PC-9 (cell line): ENCODE measurements at regions of chr3 and their contacts with region 1.

Region 1: DNA sequence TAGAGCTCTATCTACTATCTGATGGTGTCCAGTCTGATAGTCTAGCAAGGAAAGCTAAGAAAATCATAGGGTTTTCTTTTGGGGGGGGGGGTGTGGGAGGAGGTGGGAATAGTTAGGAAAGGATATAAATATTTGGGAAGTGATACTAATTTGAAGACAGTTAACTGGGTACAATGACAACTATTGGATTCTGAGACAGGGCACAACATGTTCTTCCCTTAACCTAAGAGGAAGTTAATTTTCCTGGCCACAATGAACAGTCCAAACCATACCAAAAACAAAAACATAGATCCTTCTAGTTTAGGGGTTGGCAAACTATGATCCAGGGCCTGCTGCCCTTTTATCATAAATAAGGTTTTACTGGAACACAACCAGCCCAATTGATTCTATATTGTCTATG is 10.0 kb upstream of the HCLS1 start:
- DNase-seq: no peak
- H3K4me3 ChIP-seq: no peak overlapping the region
- H3K27ac ChIP-seq: no peak overlapping the region
- H3K4me1 ChIP-seq: no peaks in the 10 kb centered on the region
- H3K27me3 ChIP-seq: no peaks in the 10 kb centered on the region
- CTCF ChIP-seq: no peak

Region 2: DNA sequence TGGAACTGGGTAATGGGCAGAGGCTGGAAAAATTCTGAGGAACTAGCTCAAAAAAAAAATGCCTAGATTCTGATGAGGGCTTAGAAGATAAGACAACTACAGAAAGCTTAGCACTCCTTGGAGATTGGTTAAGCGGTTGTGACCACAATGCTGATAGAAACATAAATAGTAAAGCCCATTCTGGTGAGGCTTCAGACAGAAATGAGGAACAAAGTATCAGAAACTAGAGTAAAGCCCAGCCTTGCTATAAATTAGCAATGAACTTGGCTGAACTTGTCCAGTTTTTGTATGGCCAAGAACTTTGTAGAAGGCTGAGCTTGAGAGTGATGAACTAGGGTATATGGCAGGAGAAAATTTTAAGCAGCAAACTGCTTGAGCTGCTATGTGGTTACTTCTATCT is 53.5 kb after region 1 on chr3:
- CTCF ChIA-PET with region 1: interaction called, 4 read pairs
- POLR2A ChIA-PET with region 1: no interaction called
- intact Hi-C with region 1: loop called (anchors 10 kb)
- DNase-seq: no peak
- H3K4me3 ChIP-seq: no peak overlapping the region
- H3K27ac ChIP-seq: no peak overlapping the region
- H3K4me1 ChIP-seq: no peaks in the 10 kb centered on the region
- H3K27me3 ChIP-seq: no peaks in the 10 kb centered on the region
- CTCF ChIP-seq: no peak

Region 3: GRCh38 chr3:122468896-122469533 is 798.3 kb after region 1 on chr3:
- CTCF ChIA-PET with region 1: no interaction called
- POLR2A ChIA-PET with region 1: no interaction called
- intact Hi-C with region 1: no loop called
- DNase-seq: no peak
- H3K4me3 ChIP-seq: no peak overlapping the region
- H3K27ac ChIP-seq: 0 out of 2 replicates have a peak overlapping the region, but pooled peaks have one; percentile 4
- H3K4me1 ChIP-seq: no peaks in the 10 kb centered on the region
- H3K27me3 ChIP-seq: no peaks in the 10 kb centered on the region
- CTCF ChIP-seq: no peak